ENCODE measurements at regions of chr5 and their contacts with region 1.

Region 1: GRCh38 chr5:159106569-159107282 is 7.0 kb upstream of the EBF1 start:
- DNase-seq: peak in 1 of 2 donors; percentile 85
- ATAC-seq: peak; percentile 82

Region 2: GRCh38 chr5:158074992-158075769 is 1031.5 kb before region 1 on chr5:
- intact Hi-C with region 1: loop called in 1 of 2 experiments (anchors 10 kb)
- DNase-seq: peak; percentile 26 to 51
- ATAC-seq: peak; percentile 78

Region 3: GRCh38 chr5:158174918-158175851 is 931.5 kb before region 1 on chr5:
- intact Hi-C with region 1: loop called in 1 of 2 experiments (anchors 5 kb)
- DNase-seq: peak; percentile 55 to 84
- ATAC-seq: peak; percentile 54

Region 4: GRCh38 chr5:159331093-159331973 is 224.6 kb after region 1 on chr5:
- intact Hi-C with region 1: no loop called
- DNase-seq: peak; percentile 39 to 79
- ATAC-seq: peak; percentile 93

Measured in left colon (tissue), 2 donors.